Right lobe of liver (tissue), 6 donors: ENCODE measurements at regions of chr16 and their contacts with region 1.

Region 1: DNA sequence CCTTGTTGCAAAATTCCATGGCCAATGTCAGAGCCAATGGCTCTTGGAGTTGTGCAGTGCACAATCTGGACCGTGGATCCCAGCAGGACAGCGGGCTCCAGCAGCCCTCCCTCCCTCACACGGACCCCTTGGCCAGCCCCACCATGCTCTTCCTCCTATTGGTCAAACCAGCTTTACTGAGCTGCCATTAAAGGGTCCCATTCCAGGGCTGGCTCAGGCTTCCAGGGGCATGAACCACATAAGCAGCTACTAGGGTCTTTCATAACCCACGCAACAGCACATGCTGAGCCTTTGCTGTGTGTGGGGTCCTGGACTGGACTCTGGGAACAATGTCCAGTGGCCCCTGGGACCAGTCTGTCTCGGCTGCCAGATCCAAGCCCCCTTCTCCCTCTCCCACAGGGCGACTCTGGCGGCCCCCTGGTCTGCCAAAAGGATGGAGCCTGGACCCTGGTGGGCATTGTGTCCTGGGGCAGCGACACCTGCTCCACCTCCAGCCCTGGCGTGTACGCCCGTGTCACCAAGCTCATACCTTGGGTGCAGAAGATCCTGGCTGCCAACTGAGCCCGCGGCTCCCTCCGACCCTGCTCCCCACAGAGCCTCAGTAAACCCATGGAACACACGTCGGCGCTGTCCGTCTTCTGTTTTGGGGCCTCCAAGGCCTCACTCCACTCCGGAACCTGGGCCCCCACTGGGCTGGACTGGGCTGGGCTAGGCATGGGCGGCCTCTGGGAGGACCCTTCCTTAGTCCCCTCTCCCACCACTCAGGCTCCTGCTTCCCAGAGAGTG is 5.7 kb downstream of the CTRB1 start:
- DNase-seq: peak in 1 of 3 donors; percentile 56
- ATAC-seq: peak in 3 of 4 donors; percentile 6 to 20 (median 14)
- H3K4me3 ChIP-seq: no peak overlapping the region
- H3K27ac ChIP-seq: no peak overlapping the region
- H3K4me1 ChIP-seq: no peaks in the 10 kb centered on the region
- H3K27me3 ChIP-seq: no peaks in the 10 kb centered on the region
- CTCF ChIP-seq: no peak
- POLR2A ChIP-seq: no peak

Region 2: DNA sequence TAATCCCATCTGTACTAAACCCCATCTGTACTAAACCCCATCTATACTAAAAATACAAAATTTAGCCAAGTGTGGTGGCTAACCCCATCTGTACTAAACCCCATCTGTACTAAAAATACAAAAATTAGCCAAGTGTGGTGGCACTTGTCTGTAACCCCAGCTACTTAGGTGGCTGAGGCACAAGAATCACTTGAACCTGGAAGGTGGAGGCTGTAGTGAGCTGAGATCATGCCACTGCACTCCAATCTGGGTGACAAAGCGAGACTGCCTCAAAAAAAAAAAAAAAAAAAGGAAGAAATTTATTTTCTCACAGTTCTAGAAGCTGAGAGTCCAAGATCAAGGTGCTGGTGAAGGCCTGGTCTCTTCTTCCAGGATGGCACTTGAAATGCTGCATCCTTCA is 64.1 kb before region 1 on chr16:
- intact Hi-C with region 1: no loop called
- DNase-seq: no peak
- ATAC-seq: no peak
- H3K4me3 ChIP-seq: no peak overlapping the region
- H3K27ac ChIP-seq: no peak overlapping the region
- H3K4me1 ChIP-seq: no peaks in the 10 kb centered on the region
- H3K27me3 ChIP-seq: no peaks in the 10 kb centered on the region
- CTCF ChIP-seq: no peak
- POLR2A ChIP-seq: no peak

Region 3: GRCh38 chr16:75206749-75207451 is 17.6 kb before region 1 on chr16 and contains the start of gene CTRB2:
- intact Hi-C with region 1: loop called in 1 of 2 experiments (anchors 2 kb)
- DNase-seq: peak in 2 of 3 donors; percentile 16 to 40
- ATAC-seq: peak in 2 of 4 donors; percentile 10 to 13
- H3K4me3 ChIP-seq: no peak within 1 kb of the TSS
- H3K27ac ChIP-seq: no peak within 1 kb of the TSS
- H3K4me1 ChIP-seq: no peaks in the 10 kb centered on the region
- H3K27me3 ChIP-seq: no peaks in the 10 kb centered on the region
- CTCF ChIP-seq: no peak
- POLR2A ChIP-seq: no peak
- total RNA-seq, gene CTRB2: not detected

Region 4: DNA sequence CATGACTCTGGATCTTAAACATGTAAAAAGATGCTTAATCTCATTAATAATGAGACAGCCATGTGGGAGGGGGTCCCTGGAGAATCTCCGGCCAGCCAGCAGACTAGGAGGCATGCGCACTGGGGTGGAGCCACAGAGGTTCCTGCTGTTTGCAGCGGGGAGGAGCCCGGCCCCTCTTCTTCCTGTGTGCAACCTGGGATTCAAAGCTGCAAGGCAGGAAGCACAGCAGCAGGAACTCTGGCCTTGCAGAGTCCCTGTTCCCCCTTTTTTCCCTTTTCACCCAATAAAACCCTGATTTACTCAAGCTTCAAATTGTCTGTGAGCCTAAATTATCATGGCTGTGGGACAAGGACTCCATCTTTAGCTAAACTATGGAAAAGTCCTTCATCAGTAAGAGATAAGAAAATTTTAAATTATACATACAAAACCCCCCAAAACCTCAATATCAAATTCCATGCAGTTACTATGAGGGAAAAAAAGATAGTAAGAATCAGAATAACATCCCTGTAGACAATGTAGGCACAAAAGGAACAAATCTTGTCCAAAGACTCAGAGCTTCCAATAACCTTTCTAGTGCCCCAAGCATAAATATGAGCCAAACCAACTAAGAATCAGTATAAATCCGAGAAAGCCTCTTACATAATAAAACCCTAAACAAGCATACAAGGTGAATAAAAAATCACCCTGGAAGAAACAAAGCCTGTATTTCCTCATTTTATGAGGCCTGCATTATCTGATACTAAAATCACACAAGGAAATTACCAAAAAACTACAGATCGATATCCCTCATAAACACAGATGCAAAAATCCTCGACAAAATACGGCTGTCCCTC is 196.7 kb after region 1 on chr16:
- intact Hi-C with region 1: no loop called
- DNase-seq: peak; percentile 53 to 65 (median 56)
- ATAC-seq: peak; percentile 60 to 78 (median 70)
- H3K4me3 ChIP-seq: no peak overlapping the region
- H3K27ac ChIP-seq: no peak overlapping the region
- H3K4me1 ChIP-seq: peaks cover 0 to 6% (median 0%) of the 10 kb centered on the region in 4 donors
- H3K27me3 ChIP-seq: no peaks in the 10 kb centered on the region
- CTCF ChIP-seq: no peak
- POLR2A ChIP-seq: no peak

Region 5: GRCh38 chr16:75506567-75506966 is 282.1 kb after region 1 on chr16:
- intact Hi-C with region 1: no loop called
- DNase-seq: no peak
- ATAC-seq: peak; percentile 79 to 91 (median 90)
- H3K4me3 ChIP-seq: no peak overlapping the region
- H3K27ac ChIP-seq: no peak overlapping the region
- H3K4me1 ChIP-seq: no peaks in the 10 kb centered on the region
- H3K27me3 ChIP-seq: no peaks in the 10 kb centered on the region
- CTCF ChIP-seq: no peak
- POLR2A ChIP-seq: no peak